ENCODE measurements at regions of chr14 and their contacts with region 1.

Region 1: DNA sequence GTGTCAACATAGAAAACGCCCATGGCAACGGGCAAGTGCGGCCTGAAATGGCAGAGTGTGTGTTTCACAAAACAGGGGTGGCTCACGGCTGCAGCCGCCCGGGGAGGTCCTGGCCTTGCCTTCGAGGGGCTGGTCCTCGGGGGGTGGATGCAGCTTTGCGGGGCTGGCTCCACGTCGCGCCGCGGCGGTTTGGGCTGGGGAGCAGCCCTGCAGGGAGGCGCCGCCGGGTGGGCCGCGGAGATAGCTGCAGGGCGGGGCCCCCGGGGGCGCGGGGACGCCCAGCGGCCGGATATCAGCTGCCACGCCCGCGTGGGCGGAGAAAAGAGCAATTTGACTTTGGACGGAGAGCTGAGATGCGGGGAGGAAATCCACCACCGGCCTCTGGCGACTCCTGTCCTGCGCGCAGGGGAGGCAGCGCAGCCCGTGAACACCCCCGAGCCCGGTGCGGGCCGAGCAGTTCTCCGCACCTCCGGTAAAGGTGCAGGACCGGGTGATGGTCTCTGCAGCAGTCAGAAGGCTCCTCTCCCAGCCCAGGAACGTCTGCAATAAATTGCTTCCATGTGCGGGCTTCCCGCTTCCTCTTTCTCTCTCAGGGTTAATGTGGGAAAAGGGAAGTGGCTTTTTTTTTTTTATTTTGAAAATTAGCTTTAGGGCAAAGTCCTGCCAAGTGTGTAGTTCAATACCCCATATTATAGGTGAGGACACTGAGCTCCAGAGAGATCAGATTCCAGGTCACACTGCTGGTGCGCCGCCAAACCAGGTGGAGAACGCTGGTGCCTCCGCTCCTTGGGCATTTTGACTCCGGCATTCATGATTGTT is 110.5 kb downstream of the ARF6 start:
- DNase-seq: peak; percentile 87
- H3K4me3 Mint-ChIP-seq: peak overlapping the region; percentile 78
- H3K27ac Mint-ChIP-seq: peak overlapping the region; percentile 98
- H3K4me1 Mint-ChIP-seq: peaks cover 83% of the 10 kb centered on the region
- H3K27me3 Mint-ChIP-seq: no peaks in the 10 kb centered on the region

Region 2: DNA sequence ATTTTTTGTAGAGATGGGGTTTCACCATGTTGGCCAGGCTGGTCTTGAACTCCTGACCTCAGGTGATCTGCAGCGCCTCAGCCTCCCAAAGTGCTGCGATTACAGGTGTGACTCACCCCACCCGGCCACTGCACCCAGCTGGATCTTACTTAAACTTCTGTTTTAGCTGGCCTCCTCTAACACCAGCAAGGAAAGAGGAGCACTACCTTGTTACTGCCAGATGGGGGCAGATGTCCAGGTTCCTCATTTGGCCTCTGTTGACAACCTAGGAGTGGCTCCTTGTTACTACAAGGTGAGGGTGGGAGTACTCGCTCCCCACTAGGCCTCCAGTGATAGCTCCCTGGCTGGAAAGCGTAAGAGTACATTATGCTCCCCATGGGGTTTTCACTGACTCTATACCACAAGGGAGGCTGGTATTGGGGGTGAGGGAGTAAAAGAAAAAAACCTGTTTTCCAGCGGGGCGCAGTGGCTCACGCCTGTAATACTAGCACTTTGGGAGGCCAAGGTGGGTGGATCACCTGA is 123.7 kb before region 1 on chr14:
- CTCF ChIA-PET with region 1: interaction called, 21 read pairs
- DNase-seq: peak; percentile 69
- H3K4me3 Mint-ChIP-seq: no peak overlapping the region
- H3K27ac Mint-ChIP-seq: peak overlapping the region; percentile 68
- H3K4me1 Mint-ChIP-seq: peaks cover 30% of the 10 kb centered on the region
- H3K27me3 Mint-ChIP-seq: peaks cover 4% of the 10 kb centered on the region

Region 3: DNA sequence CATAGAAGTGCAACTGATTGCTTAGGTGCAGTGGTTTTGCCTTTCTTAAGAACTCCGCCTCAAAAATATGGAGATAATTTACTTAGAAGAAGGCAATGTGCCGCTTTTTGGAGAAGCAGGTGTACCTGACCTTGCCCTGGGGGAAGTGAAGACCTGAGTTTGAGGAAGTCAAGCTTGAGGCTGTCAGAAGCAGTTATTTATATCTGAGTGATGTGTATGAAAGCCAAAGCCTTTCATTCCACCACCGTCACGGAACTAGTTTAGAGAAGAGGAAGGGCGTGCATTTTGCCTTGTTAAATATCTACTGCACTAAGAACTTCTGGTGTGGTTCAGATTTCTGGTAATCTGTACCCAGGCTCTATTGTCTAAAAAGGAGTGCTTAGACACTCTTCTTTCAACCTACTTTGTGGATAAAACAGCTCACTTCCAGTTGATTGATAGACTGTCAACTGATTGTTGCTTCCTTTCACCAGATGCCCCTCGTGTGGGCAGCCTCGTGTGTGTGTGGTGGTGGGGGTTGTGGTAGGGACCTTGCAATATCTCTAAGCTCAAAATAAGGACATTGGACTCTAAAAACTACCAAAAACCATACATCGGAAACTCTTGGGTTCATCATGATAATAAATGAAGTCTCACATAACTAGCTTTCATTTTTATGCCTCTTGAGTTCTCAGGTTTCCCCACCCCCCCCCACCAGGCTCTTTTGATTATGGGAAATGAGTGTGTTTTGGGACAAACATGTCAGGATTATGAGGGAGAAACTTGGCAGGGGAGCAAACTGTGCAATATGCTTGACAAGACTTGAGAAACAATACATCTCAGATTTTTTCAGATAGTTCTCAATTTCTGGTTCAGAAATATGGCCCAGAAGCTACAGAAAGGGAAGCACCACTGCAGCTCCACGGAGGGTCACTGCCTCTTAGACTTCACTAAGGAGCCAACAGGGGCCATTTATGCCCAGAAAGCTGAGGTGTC is 32.0 kb before region 1 on chr14:
- CTCF ChIA-PET with region 1: interaction called, 44 read pairs
- DNase-seq: peak; percentile 75
- H3K4me3 Mint-ChIP-seq: peak overlapping the region; percentile 77
- H3K27ac Mint-ChIP-seq: peak overlapping the region; percentile 100
- H3K4me1 Mint-ChIP-seq: peaks cover 80% of the 10 kb centered on the region
- H3K27me3 Mint-ChIP-seq: no peaks in the 10 kb centered on the region

Region 4: DNA sequence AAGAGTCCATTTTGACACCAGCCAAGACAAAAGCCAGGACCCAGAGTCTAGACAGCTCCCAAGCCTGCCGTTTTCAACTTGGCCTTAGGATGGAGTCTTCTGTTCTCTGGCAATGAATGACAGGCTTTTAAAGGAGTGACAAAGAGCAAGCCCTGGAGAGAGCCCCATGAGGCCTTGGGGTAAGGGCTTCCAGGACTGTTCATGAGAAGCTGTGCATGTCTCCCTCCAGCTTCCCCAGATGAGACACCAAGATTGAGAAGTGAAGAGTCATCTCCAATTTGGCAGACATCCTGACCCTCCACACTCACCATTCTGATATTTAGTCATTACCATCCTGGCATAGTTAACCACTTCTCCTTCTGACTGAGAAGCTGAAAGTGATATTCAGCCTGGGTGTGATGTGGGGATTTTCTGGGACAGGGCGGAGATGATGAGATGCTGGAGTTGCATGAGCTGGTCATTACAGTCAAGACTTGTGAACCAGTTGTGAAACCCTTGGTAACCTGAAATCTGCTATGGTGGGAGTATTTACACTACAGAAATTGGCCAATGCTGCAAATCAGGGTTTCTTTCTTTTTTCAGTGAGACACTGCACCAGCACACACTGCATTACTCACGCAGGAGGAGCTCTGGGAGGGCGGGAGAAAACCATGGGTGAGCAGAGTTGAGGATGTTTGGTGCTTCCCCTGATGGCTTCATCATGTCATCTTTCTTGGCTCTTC is 35.1 kb after region 1 on chr14:
- CTCF ChIA-PET with region 1: interaction called, 11 read pairs
- DNase-seq: peak; percentile 50
- H3K4me3 Mint-ChIP-seq: peak overlapping the region; percentile 25
- H3K27ac Mint-ChIP-seq: peak overlapping the region; percentile 97
- H3K4me1 Mint-ChIP-seq: peaks cover 73% of the 10 kb centered on the region
- H3K27me3 Mint-ChIP-seq: no peaks in the 10 kb centered on the region

Region 5: DNA sequence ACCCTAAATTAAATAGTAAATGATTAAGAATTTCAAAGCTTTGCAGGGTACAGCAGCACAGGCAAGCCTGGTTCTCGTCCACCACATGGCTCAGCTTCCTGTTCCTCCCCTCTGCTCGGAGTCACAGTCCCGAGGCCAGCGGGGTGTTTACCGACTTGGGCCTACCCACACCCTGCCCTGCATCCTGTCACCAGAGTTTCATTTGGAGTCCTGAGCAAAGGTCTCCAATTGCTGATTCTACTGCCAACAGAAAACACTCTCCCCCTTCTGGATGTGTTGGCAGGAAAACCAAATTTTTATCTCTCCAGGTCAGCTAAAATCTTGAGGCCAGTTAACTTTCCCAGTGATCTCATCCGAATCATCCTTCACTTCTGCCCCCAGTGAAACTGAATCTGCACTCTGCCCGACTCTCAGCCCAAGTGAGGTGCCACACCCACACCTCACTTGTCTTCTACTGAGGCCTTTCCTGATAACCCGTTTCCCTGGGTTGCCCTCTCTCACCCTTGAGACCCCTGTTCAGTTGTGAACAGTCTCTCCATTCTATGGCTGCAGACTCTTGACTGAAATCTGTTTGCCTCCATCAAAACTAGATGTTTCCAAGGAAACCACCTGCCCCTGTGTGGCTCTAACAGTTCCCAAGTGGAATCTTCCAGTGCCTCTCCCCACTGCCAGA is 41.8 kb after region 1 on chr14:
- CTCF ChIA-PET with region 1: interaction called, 11 read pairs
- DNase-seq: peak; percentile 90
- H3K4me3 Mint-ChIP-seq: peak overlapping the region; percentile 24
- H3K27ac Mint-ChIP-seq: peak overlapping the region; percentile 96
- H3K4me1 Mint-ChIP-seq: peaks cover 75% of the 10 kb centered on the region
- H3K27me3 Mint-ChIP-seq: no peaks in the 10 kb centered on the region

Measured in activated naive CD4-positive, alpha-beta T cell treated with anti-CD3 and anti-CD28 coated beads, Interleukin-2, amount 10 ng/mL, durations not matched to agents 7 days and 5 days (primary cell).